B cell (primary cell): ENCODE measurements at regions of chr15 and their contacts with region 1.

Region 1: DNA sequence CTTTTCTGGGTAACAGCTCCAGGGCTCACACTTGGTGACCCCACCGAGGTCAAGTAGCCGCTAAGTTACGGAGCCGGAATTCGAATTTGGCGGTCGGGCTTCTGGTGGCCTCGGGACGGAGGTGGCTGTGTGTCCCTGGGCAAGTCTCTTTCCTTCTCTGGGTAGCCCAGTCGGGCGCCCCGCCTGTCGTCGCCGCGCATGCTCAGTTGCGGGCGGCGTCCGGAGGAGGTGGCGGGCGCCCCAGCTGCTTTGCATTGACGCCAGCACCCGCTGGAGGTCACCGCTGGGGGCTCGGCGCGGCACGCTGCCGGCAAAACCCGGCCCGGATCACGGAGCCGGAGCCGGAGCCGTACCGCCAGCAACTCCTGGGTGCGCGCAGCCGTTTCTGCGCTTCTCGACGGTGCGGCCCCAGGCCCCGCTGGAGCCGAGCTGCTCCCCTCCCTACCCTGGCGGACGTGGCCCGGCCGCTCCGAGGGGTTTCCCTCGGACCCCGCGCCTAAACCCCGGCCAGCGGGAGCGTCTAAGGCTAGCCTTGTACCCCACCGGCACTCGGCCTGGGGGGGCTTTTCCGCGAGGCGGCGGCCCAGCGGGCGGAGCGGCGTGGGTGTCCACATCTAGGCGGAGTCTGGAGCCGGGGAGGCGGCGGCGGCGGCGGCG is 474 bp upstream of the PDE8A start:
- DNase-seq: peak; percentile 98
- ATAC-seq: peak; percentile 72
- H3K4me3 ChIP-seq: peak overlapping the region; percentile 66 to 97 (median 79)
- H3K4me3 Mint-ChIP-seq: peak overlapping the region; percentile 96
- H3K27ac ChIP-seq: peak overlapping the region; percentile 97
- H3K27ac Mint-ChIP-seq: peak overlapping the region; percentile 97
- H3K4me1 ChIP-seq: peaks cover 21 to 22% of the 10 kb centered on the region in 2 donors
- H3K4me1 Mint-ChIP-seq: peaks cover 41% of the 10 kb centered on the region
- H3K27me3 ChIP-seq: no peaks in the 10 kb centered on the region
- H3K27me3 Mint-ChIP-seq: no peaks in the 10 kb centered on the region
- CTCF ChIP-seq: no peak

Region 2: GRCh38 chr15:84600851-84601838 is 380.0 kb before region 1 on chr15 and contains the start of gene ZSCAN2:
- CTCF ChIA-PET with region 1: no interaction called
- POLR2A ChIA-PET with region 1: no interaction called
- intact Hi-C with region 1: loop called (anchors 1 kb)
- DNase-seq: peak; percentile 93
- ATAC-seq: peak; percentile 94
- H3K4me3 ChIP-seq: peak within 1 kb of the TSS; percentile 78 to 95 (median 86)
- H3K4me3 Mint-ChIP-seq: peak within 1 kb of the TSS; percentile 99
- H3K27ac ChIP-seq: peak within 1 kb of the TSS; percentile 32 to 47
- H3K27ac Mint-ChIP-seq: peak within 1 kb of the TSS; percentile 96
- H3K4me1 ChIP-seq: peaks cover 29 to 52% of the 10 kb centered on the region in 2 donors
- H3K4me1 Mint-ChIP-seq: peaks cover 64% of the 10 kb centered on the region
- H3K27me3 ChIP-seq: no peaks in the 10 kb centered on the region
- H3K27me3 Mint-ChIP-seq: no peaks in the 10 kb centered on the region
- CTCF ChIP-seq: no peak
- total RNA-seq, gene ZSCAN2: 16.2 and 18.6 TPM in 2 replicates

Region 3: GRCh38 chr15:84748274-84749110 is 232.7 kb before region 1 on chr15 and contains the start of gene ZNF592:
- CTCF ChIA-PET with region 1: no interaction called
- POLR2A ChIA-PET with region 1: no interaction called
- intact Hi-C with region 1: loop called (anchors 5 kb)
- DNase-seq: peak; percentile 90
- ATAC-seq: peak; percentile 66
- H3K4me3 ChIP-seq: peak within 1 kb of the TSS; percentile 69 to 93 (median 79)
- H3K4me3 Mint-ChIP-seq: peak within 1 kb of the TSS; percentile 100
- H3K27ac ChIP-seq: peak within 1 kb of the TSS; percentile 86 to 97
- H3K27ac Mint-ChIP-seq: peak within 1 kb of the TSS; percentile 98
- H3K4me1 ChIP-seq: peaks cover 52 to 65% of the 10 kb centered on the region in 2 donors
- H3K4me1 Mint-ChIP-seq: peaks cover 66% of the 10 kb centered on the region
- H3K27me3 ChIP-seq: no peaks in the 10 kb centered on the region
- H3K27me3 Mint-ChIP-seq: no peaks in the 10 kb centered on the region
- CTCF ChIP-seq: no peak
- total RNA-seq, gene ZNF592: 59.5 and 64.4 TPM in 2 replicates

Region 4: DNA sequence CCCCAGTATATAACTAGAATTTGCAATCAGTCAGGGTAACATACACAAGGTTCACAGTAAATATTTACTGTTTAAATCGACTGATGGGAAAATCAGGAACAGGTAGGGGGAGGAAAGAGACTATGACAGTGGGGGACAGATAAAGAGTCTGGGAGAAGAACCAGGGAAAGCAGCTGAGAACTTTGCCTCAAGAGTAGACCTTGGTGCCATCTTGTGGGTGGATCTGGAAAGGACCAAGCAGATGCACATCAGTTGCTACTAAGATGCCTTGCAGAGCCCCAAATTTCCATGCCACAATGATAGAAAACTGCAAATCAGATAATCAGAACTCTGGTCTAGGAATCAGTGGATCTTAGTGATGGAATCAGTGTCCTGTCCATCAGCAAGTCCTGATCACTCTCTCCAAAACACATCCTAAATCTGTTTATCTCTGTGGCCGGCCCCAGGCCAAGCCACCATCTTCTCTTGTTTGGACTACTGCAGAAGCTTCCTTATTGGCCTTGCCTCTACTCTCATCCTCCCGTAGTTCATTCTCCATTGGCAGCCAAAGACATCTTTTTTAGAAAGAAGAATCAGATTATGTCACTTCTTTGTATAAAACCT is 63.2 kb after region 1 on chr15:
- CTCF ChIA-PET with region 1: interaction called, 9 read pairs
- POLR2A ChIA-PET with region 1: interaction called, 3 read pairs
- intact Hi-C with region 1: loop called (anchors 10 kb)
- DNase-seq: peak; percentile 71
- ATAC-seq: peak; percentile 49
- H3K4me3 ChIP-seq: no peak overlapping the region
- H3K4me3 Mint-ChIP-seq: no peak overlapping the region
- H3K27ac ChIP-seq: no peak overlapping the region
- H3K27ac Mint-ChIP-seq: no peak overlapping the region
- H3K4me1 ChIP-seq: peaks cover 3 to 9% of the 10 kb centered on the region in 2 donors
- H3K4me1 Mint-ChIP-seq: peaks cover 32% of the 10 kb centered on the region
- H3K27me3 ChIP-seq: no peaks in the 10 kb centered on the region
- H3K27me3 Mint-ChIP-seq: no peaks in the 10 kb centered on the region
- CTCF ChIP-seq: peak; percentile 67

Region 5: DNA sequence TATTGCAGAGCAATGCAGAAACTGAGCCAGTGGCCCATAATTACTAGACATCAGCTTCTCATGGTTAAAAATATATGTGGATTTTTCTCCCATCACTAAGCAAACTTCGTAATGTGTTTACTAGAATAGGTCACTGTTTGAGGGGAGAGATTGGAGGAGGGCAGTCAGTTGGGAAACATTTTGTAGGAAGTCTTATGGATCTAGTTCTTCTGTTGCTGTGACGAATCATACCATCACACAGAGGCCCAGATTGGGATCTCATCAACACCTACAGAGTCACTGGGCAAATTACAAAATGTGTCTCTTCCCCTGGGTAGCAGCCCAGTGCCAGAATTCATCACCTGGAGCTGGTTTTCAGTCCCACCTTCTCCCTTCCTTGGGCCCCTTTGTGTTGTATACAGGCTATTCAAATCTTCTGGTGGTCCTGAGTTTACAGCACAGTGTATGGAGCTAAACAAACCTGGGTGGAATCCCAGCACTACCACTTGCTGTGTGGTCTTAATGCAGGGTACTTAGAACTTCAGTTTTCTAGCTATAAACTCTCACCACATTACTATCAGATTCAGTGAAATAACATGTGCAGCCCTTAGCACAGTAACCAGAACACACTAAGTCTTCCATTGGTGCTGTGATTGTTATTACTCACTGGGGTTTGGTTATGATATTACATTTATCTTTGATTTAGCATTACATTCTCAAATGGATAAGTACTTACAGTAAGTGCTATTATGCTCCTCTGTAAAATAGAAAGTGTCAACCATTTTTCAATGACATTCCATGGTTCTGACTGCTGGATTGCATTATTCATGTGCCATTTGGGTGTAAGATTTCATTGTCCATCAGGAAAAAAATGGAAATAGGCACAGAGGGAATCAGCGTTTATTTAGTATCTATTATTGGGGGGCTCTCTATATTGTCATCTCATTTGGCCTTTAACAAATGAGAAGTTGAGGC is 82.2 kb after region 1 on chr15:
- CTCF ChIA-PET with region 1: no interaction called
- POLR2A ChIA-PET with region 1: no interaction called
- intact Hi-C with region 1: no loop called
- DNase-seq: no peak
- ATAC-seq: no peak
- H3K4me3 ChIP-seq: no peak overlapping the region
- H3K4me3 Mint-ChIP-seq: no peak overlapping the region
- H3K27ac ChIP-seq: no peak overlapping the region
- H3K27ac Mint-ChIP-seq: no peak overlapping the region
- H3K4me1 ChIP-seq: no peaks in the 10 kb centered on the region
- H3K4me1 Mint-ChIP-seq: no peaks in the 10 kb centered on the region
- H3K27me3 ChIP-seq: no peaks in the 10 kb centered on the region
- H3K27me3 Mint-ChIP-seq: no peaks in the 10 kb centered on the region
- CTCF ChIP-seq: no peak